ENCODE measurements at regions of chr2 and their contacts with region 1.

Region 1: GRCh38 chr2:161063157-161063954 is 96.9 kb upstream of the TANK start:
- DNase-seq: peak; percentile 68
- H3K4me3 Mint-ChIP-seq: no peak overlapping the region
- H3K27ac Mint-ChIP-seq: no peak overlapping the region
- H3K4me1 Mint-ChIP-seq: peaks cover 15% of the 10 kb centered on the region
- H3K27me3 Mint-ChIP-seq: peaks cover 2% of the 10 kb centered on the region

Region 2: DNA sequence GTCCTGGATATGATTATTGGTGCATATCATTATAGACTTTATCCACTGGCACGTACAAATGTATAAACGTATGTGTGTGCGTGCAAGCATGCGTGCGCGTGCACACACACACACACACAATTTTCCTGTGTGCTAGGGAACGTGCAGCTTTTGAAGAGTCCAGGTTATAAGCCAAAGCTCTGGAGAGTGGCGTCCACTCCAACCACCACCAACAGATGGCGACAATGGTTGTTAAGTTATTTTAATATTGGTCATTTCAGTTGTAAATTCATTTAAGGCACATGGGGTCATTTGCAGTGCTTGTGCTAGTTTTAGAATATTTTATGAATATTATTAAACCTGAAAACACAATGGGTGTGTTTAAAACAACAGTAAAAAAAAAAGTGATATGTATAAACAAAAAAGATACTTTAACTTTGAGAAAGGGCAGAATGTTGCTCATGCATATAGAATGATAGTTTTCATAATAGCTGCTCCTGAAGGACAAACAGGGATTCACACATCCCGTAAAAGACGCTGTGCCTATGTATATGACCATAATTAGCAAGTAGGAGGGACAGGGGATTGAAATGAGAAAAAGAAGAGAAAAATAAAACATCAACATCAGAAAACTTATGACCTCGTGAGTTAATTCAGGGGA is 739.1 kb before region 1 on chr2:
- CTCF ChIA-PET with region 1: interaction called, 14 read pairs
- POLR2A ChIA-PET with region 1: no interaction called
- DNase-seq: peak; percentile 49
- H3K4me3 Mint-ChIP-seq: no peak overlapping the region
- H3K27ac Mint-ChIP-seq: no peak overlapping the region
- H3K4me1 Mint-ChIP-seq: peaks cover 50% of the 10 kb centered on the region
- H3K27me3 Mint-ChIP-seq: peaks cover 4% of the 10 kb centered on the region

Region 3: DNA sequence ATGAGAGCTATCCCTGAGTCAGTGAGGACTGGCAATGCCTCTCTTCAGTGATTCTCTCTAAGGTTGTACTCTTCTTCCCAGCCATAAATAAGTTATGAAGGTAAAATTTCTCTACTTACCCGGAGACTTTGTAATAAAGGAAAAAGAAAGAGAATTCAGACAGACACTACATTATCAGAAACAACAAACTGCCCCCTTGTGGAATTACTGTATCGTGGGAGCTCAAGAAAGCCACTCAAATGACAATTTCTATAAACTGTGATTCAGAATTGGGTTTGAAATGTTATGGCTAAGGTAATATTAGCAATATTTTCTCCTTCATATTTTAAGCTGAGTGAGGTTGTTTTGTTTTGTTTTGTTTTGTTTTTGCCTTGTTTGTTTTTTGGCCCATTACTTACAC is 59.0 kb before region 1 on chr2:
- CTCF ChIA-PET with region 1: interaction called, 13 read pairs
- POLR2A ChIA-PET with region 1: no interaction called
- DNase-seq: no peak
- H3K4me3 Mint-ChIP-seq: no peak overlapping the region
- H3K27ac Mint-ChIP-seq: no peak overlapping the region
- H3K4me1 Mint-ChIP-seq: no peaks in the 10 kb centered on the region
- H3K27me3 Mint-ChIP-seq: peaks cover 20% of the 10 kb centered on the region

Region 4: GRCh38 chr2:161077367-161078210 is 14.2 kb after region 1 on chr2:
- CTCF ChIA-PET with region 1: interaction called, 36 read pairs
- POLR2A ChIA-PET with region 1: interaction called, 5 read pairs
- DNase-seq: peak; percentile 86
- H3K4me3 Mint-ChIP-seq: peak overlapping the region; percentile 36
- H3K27ac Mint-ChIP-seq: peak overlapping the region; percentile 90
- H3K4me1 Mint-ChIP-seq: peaks cover 49% of the 10 kb centered on the region
- H3K27me3 Mint-ChIP-seq: no peaks in the 10 kb centered on the region

Region 5: DNA sequence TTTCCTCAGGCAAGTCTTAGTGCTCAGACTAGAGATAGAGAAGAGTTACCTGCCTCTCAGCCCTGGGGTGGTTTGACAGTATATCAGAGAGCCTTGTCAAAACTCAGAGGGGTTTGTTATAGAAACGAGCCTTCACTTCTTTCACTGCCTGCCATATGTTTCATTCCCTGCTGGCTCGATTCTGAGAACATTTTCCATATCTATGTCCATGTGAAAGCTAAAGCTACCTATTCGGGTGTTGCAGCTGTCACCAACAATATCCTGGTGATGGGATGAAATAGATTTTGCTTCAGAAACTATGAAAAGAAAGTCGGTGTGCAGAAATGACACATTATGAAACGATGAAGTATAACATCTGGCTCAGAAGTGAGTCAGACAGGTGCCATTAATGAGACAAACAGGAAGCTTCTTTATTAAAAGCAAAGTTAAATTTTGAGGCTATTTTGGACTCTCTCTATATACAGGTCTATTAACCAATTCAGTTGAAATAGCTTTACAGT is 40.7 kb after region 1 on chr2:
- CTCF ChIA-PET with region 1: interaction called, 13 read pairs
- POLR2A ChIA-PET with region 1: interaction called, 5 read pairs
- DNase-seq: no peak
- H3K4me3 Mint-ChIP-seq: peak overlapping the region; percentile 36
- H3K27ac Mint-ChIP-seq: peak overlapping the region; percentile 34
- H3K4me1 Mint-ChIP-seq: peaks cover 32% of the 10 kb centered on the region
- H3K27me3 Mint-ChIP-seq: peaks cover 2% of the 10 kb centered on the region